ENCODE measurements at regions of chr1 and their contacts with region 1.

Region 1: GRCh38 chr1:220272047-220272840 is at the start of gene RAB3GAP2:
- DNase-seq: peak; percentile 99
- H3K4me3 Mint-ChIP-seq: no peak within 1 kb of the TSS
- H3K27ac Mint-ChIP-seq: no peak within 1 kb of the TSS
- H3K4me1 Mint-ChIP-seq: peaks cover 11% of the 10 kb centered on the region
- H3K27me3 Mint-ChIP-seq: peaks cover 18% of the 10 kb centered on the region
- CTCF ChIP-seq: no peak
- total RNA-seq, gene RAB3GAP2: 93.3 and 97.6 TPM in 2 replicates

Region 2: DNA sequence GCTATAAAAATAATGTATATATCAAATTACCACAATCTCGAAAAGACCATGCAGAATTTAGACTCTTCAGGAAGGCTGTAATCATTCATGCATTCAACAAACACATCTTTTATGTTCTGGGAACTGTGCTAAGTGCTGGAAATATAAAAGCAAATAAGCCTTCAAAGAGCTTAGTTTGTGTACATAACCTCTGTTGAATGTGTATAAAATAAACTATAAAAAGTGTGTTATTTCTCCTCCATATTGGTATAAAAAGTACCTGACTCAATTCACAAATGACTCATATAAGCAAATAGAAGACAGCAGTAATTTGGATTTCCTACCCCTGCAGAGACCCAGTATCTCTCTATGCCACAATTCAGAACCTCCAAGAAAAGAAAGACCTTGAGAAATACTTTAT is 36.8 kb before region 1 on chr1:
- CTCF ChIA-PET with region 1: interaction called, 3 read pairs
- POLR2A ChIA-PET with region 1: interaction called, 14 read pairs
- intact Hi-C with region 1: no loop called
- DNase-seq: peak; percentile 17
- H3K4me3 Mint-ChIP-seq: no peak overlapping the region
- H3K27ac Mint-ChIP-seq: no peak overlapping the region
- H3K4me1 Mint-ChIP-seq: peaks cover 6% of the 10 kb centered on the region
- H3K27me3 Mint-ChIP-seq: no peaks in the 10 kb centered on the region
- CTCF ChIP-seq: no peak

Region 3: GRCh38 chr1:220255204-220255603 is 17.0 kb before region 1 on chr1:
- CTCF ChIA-PET with region 1: interaction called, 8 read pairs
- POLR2A ChIA-PET with region 1: interaction called, 32 read pairs
- intact Hi-C with region 1: no loop called
- DNase-seq: no peak
- H3K4me3 Mint-ChIP-seq: no peak overlapping the region
- H3K27ac Mint-ChIP-seq: peak overlapping the region; percentile 1
- H3K4me1 Mint-ChIP-seq: peaks cover 5% of the 10 kb centered on the region
- H3K27me3 Mint-ChIP-seq: no peaks in the 10 kb centered on the region
- CTCF ChIP-seq: no peak

Region 4: DNA sequence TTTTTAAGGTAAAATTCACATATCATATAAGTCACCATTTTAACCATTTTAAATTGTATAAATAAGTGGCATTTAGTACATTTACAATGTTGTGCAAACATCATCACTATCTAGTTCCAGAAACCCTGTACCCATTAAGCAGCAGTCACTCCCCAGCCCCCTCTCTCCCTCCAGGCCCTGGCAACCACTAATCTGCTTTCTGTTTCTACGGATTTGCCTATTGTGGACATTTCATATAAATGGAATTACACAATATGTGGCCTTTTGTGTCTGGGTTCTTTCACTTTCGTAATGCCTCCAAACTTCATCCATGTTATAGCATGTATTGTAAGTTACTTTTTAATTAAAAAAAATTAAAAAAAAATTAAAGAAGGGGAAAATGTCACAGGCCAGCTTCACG is 58.0 kb after region 1 on chr1:
- CTCF ChIA-PET with region 1: no interaction called
- POLR2A ChIA-PET with region 1: no interaction called
- intact Hi-C with region 1: no loop called
- DNase-seq: peak; percentile 68
- H3K4me3 Mint-ChIP-seq: no peak overlapping the region
- H3K27ac Mint-ChIP-seq: no peak overlapping the region
- H3K4me1 Mint-ChIP-seq: peaks cover 12% of the 10 kb centered on the region
- H3K27me3 Mint-ChIP-seq: no peaks in the 10 kb centered on the region
- CTCF ChIP-seq: no peak

Region 5: GRCh38 chr1:220347654-220348175 is 75.5 kb after region 1 on chr1:
- CTCF ChIA-PET with region 1: no interaction called
- POLR2A ChIA-PET with region 1: no interaction called
- intact Hi-C with region 1: loop called (anchors 2 kb)
- DNase-seq: peak; percentile 84
- H3K4me3 Mint-ChIP-seq: no peak overlapping the region
- H3K27ac Mint-ChIP-seq: no peak overlapping the region
- H3K4me1 Mint-ChIP-seq: peaks cover 21% of the 10 kb centered on the region
- H3K27me3 Mint-ChIP-seq: no peaks in the 10 kb centered on the region
- CTCF ChIP-seq: no peak